Dorsolateral prefrontal cortex (tissue), 120 donors: ENCODE measurements at regions of chr2 and their contacts with region 1.

Region 1: GRCh38 chr2:239318790-239319661 is 81.8 kb downstream of the HDAC4 start:
- DNase-seq: peak in 2 of 10 donors; percentile 12 to 46
- H3K4me3 ChIP-seq: peak overlapping the region in 36 of 59 donors; percentile 6 to 62 (median 36)
- H3K27ac ChIP-seq: peak overlapping the region in 52 of 59 donors; percentile 11 to 95 (median 80)
- H3K27me3 ChIP-seq: no peaks in the 10 kb centered on the region
- CTCF ChIP-seq: no peak

Region 2: GRCh38 chr2:239223310-239224198 is 95.5 kb before region 1 on chr2:
- intact Hi-C with region 1: loop called in 1 of 2 experiments (anchors 5 kb)
- DNase-seq: peak in 9 of 10 donors; percentile 71 to 89 (median 82)
- H3K4me3 ChIP-seq: peak overlapping the region in 43 of 59 donors; percentile 1 to 55 (median 24)
- H3K27ac ChIP-seq: peak overlapping the region; percentile 83 to 99 (median 97)
- H3K27me3 ChIP-seq: no peaks in the 10 kb centered on the region
- CTCF ChIP-seq: no peak

Region 3: DNA sequence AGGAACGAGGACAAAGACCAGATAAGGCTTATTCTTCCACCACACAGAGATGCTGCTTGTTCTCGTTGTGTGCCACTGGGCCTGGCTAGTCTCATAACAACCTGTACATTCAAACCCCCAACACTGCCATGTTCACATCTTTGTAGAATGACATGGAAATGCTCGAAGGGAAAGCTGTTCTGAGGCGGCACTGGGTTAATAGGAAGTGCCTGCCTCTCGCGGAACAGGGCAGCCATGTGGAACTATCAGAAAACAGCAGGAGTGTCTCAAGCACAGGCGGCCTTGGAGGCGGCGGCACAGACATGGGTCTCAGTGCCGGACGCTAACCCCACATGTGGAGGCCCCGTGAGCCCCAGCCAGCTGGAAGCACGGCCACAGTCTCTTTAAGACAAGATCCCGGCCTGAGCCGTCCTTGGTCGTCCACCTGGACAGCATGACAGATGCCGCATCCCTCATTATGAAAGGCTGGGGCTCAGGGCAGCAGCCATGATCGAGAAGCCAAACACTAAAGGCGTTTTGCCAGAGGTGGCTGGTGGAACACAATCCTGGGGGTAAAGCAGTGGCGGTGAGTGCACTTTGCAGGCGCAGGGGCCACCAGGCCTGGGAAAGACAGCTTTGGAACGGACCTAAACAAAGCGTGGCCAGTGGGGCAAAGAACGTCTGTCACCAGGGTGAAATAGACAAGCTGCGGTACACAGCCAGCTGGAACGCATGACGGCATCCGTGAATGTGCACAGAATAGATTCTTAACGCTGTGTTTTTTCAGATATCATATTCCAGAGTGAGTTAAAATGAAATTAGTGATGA is 79.2 kb before region 1 on chr2:
- intact Hi-C with region 1: no loop called
- DNase-seq: peak in 5 of 10 donors; percentile 64 to 73 (median 68)
- H3K4me3 ChIP-seq: peak overlapping the region in 56 of 59 donors; percentile 2 to 57 (median 33)
- H3K27ac ChIP-seq: peak overlapping the region; percentile 67 to 99 (median 94)
- H3K27me3 ChIP-seq: no peaks in the 10 kb centered on the region
- CTCF ChIP-seq: no peak

Region 4: DNA sequence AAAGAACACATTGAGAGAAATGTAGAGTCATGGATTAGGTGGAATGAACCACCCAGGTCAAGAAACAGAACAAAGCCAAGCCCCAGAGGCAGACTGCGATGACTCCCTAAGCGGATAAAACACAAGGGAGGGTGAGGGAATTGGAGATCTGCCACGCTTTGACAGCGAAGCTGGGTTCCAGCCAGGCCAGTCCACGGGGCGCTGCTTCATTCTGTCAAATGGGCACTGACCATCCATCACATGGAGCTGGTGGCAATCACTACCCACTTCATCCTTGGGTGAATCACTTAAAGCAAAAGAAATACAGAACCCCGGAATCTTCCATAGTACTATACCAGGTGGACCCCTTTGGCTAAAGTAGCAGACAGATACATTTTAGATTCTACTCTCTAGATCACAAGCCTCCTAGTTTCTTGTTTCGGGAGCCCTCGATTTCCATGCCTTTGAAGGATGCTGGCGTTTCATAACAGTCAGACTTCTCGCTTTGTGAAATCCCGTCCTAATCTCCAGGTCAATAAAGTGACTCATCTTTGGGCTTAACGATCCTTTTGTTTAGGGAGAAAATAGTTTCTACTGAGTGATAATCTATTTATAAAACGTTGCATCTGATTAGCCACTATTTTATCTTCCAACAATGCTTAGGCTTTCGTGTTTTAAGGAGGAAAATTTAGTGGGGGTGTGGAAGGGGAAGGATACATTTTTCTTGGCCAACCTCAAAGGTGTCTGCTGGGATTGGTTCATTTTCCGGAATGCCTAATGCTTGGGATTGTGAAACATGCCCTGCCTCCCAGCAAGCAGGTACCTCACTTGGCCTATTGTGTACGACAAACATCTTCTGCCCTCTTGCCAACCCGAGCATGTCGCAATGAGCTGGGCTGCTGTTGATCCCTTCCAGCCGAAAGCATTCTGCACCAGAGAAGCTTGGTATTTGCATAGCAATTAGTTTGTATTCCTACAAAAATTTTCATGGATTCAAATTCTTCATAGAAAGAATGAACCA is 125.9 kb after region 1 on chr2:
- intact Hi-C with region 1: no loop called
- DNase-seq: peak in 9 of 10 donors; percentile 65 to 91 (median 75)
- H3K4me3 ChIP-seq: peak overlapping the region in 18 of 59 donors; percentile 0 to 42 (median 19)
- H3K27ac ChIP-seq: peak overlapping the region; percentile 67 to 100 (median 98)
- H3K27me3 ChIP-seq: no peaks in the 10 kb centered on the region
- CTCF ChIP-seq: peak in 2 of 56 donors; percentile 15 to 22